HEK293 (cell line): ENCODE measurements at regions of chr9 and their contacts with region 1.

Region 1: DNA sequence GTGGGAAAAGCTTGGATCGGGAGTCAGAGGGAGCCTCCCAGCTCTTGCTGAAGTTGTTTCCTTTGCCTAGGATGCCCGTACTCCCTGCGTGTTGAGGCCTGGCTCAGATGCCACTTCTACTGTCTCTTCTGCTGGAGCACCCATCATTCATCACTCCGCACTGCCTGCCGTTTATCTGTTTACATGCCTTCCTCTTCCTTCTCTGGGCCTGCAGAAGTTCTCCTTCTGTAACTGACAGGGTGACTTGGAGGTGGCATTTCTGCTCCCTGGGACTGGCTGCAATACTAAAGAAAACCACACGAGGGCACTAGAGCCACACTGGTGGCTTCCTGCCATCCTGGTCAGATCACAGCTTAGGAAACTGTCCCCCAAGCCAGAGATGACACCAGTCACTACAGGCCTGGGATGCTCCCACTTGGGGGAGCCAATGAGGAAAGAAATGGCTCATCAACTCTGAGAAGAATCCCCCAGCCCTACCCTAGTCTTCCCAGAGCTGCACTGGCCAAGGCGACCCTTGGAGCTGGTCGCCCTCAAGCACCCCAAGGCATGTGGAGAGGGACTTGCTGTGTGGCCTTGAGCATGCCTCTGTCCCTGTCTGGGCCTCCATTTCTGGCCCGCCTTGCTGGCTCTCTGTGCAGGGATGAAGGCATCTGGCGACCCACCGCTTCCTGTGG is 9.7 kb upstream of the SLC25A51 start:
- H3K4me3 ChIP-seq: no peak overlapping the region
- H3K27ac ChIP-seq: no peak overlapping the region
- H3K4me1 ChIP-seq: no peaks in the 10 kb centered on the region
- CTCF ChIP-seq: peak; percentile 94

Region 2: GRCh38 chr9:37880916-37881479 is 32.6 kb before region 1 on chr9:
- CTCF ChIA-PET with region 1: no interaction called
- POLR2A ChIA-PET with region 1: no interaction called
- H3K4me3 ChIP-seq: no peak overlapping the region
- H3K27ac ChIP-seq: no peak overlapping the region
- H3K4me1 ChIP-seq: no peaks in the 10 kb centered on the region
- CTCF ChIP-seq: no peak

Region 3: DNA sequence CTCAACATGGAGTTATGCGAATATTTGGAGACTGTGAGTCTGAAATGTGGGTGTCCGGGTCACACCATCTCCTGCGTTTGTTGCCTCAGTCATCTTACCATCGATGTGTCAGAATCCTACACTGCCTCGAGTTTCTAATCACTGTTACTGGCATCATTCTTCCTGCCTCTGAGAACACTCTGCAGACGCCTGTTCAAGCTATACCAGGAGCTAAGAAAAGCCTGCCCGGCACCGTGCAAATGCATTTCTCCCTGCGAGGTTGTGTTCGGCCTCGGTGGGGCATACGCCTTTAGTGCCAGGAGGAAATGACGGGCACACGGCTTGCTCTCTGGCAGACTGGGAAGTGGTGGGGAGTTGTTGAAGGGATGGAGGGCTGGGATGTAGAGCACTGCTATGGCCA is 21.5 kb after region 1 on chr9:
- CTCF ChIA-PET with region 1: interaction called, 10 read pairs
- POLR2A ChIA-PET with region 1: no interaction called
- H3K4me3 ChIP-seq: no peak overlapping the region
- H3K27ac ChIP-seq: no peak overlapping the region
- H3K4me1 ChIP-seq: peaks cover 4% of the 10 kb centered on the region
- CTCF ChIP-seq: no peak

Region 4: DNA sequence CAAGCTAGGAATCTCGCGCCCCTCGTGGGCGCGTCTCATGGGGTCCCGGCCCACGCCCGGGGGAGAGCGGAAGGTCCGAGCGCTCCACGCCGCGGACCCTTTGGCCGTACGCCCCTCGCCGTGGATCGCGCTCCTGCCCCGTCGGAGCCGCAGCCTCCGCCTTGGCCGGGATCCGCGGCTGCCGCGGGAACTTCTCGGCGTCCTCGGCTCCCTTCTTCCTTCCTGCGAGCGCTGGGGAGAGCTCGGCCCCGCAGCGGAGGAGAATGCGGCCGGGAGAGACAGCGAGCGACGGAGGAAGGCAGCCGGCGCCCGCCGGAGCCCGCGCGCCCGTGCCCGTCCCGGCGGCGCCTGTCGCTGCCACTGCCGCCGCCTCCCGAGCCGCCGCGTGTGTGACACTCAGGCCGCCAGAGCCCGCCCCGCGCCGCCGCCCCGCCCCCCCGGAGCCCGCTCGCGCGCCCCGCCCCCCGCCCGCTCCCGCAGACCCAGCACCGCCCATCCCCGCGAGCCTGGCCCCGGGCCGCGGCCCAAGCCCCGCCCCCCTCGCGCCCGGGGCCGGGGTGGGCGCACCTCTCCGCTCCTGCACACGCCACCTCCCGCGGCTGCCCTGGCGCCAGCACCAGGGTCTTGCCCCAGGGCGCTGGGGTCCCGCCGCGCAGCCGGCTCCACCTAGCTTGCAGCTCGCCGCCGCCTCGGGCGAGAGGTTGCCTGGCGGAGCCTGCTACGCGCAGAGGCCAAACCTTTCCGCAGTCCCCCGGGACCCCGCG is 155.4 kb after region 1 on chr9 and contains the start of gene SHB:
- CTCF ChIA-PET with region 1: interaction called, 11 read pairs
- POLR2A ChIA-PET with region 1: interaction called, 8 read pairs
- H3K4me3 ChIP-seq: peak within 1 kb of the TSS; percentile 72
- H3K27ac ChIP-seq: peak within 1 kb of the TSS; percentile 87
- H3K4me1 ChIP-seq: 0 out of 2 replicates have a peak, but pooled peaks cover 2% of the 10 kb centered on the region
- CTCF ChIP-seq: peak; percentile 72

Region 5: GRCh38 chr9:38160613-38161215 is 247.1 kb after region 1 on chr9:
- CTCF ChIA-PET with region 1: interaction called, 16 read pairs
- POLR2A ChIA-PET with region 1: no interaction called
- H3K4me3 ChIP-seq: no peak overlapping the region
- H3K27ac ChIP-seq: no peak overlapping the region
- H3K4me1 ChIP-seq: no peaks in the 10 kb centered on the region
- CTCF ChIP-seq: no peak

Region 6: GRCh38 chr9:38263532-38263931 is 349.9 kb after region 1 on chr9:
- CTCF ChIA-PET with region 1: interaction called, 13 read pairs
- POLR2A ChIA-PET with region 1: interaction called, 4 read pairs
- H3K4me3 ChIP-seq: no peak overlapping the region
- H3K27ac ChIP-seq: no peak overlapping the region
- H3K4me1 ChIP-seq: no peaks in the 10 kb centered on the region
- CTCF ChIP-seq: no peak

Region 7: DNA sequence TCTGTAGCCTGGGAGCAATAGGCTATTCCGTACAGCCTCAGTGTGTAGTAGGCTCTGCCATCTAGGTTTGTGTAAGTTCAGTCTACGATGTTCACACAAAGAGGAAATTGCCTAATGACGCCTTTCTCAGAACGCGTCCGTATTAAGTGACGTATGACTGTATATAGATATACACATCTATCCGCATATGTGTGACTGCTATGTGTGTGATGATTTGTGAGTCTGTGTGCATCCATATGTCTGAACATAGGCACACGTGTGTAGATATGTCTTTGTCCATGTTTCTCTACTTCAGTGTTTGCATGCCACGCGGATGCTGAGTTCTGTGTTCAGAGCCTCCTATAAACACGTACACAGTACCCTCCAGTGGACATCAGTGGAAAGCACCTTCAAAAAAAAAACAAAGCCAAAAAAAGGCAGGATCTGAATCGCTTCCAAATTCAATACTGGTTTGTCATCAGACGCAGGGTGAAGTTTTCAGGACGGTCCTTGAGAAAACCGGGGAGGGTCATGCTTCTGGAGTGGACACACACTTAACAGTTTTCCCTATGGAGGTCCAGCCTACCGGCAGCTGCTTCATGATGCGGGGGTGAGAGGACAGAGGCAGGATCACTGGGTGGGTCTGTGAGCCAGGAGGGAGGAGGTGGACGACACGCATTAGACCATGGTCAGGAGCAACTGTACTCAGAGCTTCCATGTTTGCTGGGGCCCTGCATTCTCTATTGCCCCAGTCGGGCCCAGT is 449.4 kb after region 1 on chr9:
- CTCF ChIA-PET with region 1: interaction called, 20 read pairs
- POLR2A ChIA-PET with region 1: no interaction called
- H3K4me3 ChIP-seq: no peak overlapping the region
- H3K27ac ChIP-seq: no peak overlapping the region
- H3K4me1 ChIP-seq: no peaks in the 10 kb centered on the region
- CTCF ChIP-seq: no peak; the same call in 1 of the 2 replicates

Region 8: GRCh38 chr9:38432922-38433510 is 519.4 kb after region 1 on chr9:
- CTCF ChIA-PET with region 1: interaction called, 18 read pairs
- POLR2A ChIA-PET with region 1: no interaction called
- H3K4me3 ChIP-seq: no peak overlapping the region
- H3K27ac ChIP-seq: no peak overlapping the region
- H3K4me1 ChIP-seq: no peaks in the 10 kb centered on the region
- CTCF ChIP-seq: no peak